ENCODE measurements at regions of chr14 and their contacts with region 1.

Region 1: GRCh38 chr14:89681086-89682018 is 264.3 kb upstream of the FOXN3 start:
- DNase-seq: peak; percentile 81
- ATAC-seq: peak; percentile 88
- H3K4me3 Mint-ChIP-seq: peak overlapping the region; percentile 58
- H3K27ac Mint-ChIP-seq: peak overlapping the region; percentile 83
- H3K4me1 Mint-ChIP-seq: peaks cover 41% of the 10 kb centered on the region
- H3K27me3 Mint-ChIP-seq: no peaks in the 10 kb centered on the region

Region 2: GRCh38 chr14:89701211-89702043 is 20.1 kb after region 1 on chr14:
- CTCF ChIA-PET with region 1: interaction called, 4 read pairs
- POLR2A ChIA-PET with region 1: no interaction called
- intact Hi-C with region 1: loop called in 1 of 2 experiments (anchors 1 kb)
- DNase-seq: peak; percentile 92
- ATAC-seq: peak; percentile 81
- H3K4me3 Mint-ChIP-seq: peak overlapping the region; percentile 65
- H3K27ac Mint-ChIP-seq: peak overlapping the region; percentile 83
- H3K4me1 Mint-ChIP-seq: peaks cover 49% of the 10 kb centered on the region
- H3K27me3 Mint-ChIP-seq: no peaks in the 10 kb centered on the region

Region 3: DNA sequence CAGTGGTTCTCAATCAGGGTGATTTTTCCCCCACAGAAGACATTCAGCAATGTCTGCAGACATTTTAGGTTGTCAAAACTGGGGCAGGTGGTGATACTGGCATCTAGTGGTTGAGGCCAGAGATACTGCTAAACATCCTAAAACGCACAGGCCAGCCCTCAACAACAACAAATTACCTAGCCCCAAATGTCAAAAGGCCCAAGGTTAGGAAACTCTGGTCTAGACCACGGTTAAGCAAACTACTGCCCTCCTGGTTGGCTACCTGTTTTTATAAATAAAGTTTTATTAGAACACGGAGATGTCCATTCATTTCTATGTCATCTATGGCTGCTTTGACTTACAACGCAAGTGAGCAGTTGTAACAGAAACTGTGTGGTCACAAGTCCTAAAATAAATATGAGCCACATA is 86.5 kb after region 1 on chr14:
- CTCF ChIA-PET with region 1: no interaction called
- POLR2A ChIA-PET with region 1: no interaction called
- intact Hi-C with region 1: loop called in 1 of 2 experiments (anchors 5 kb)
- DNase-seq: peak; percentile 78
- ATAC-seq: peak; percentile 95
- H3K4me3 Mint-ChIP-seq: peak overlapping the region; percentile 13
- H3K27ac Mint-ChIP-seq: peak overlapping the region; percentile 82
- H3K4me1 Mint-ChIP-seq: peaks cover 25% of the 10 kb centered on the region
- H3K27me3 Mint-ChIP-seq: peaks cover 2% of the 10 kb centered on the region

Region 4: GRCh38 chr14:89881839-89882238 is 200.5 kb after region 1 on chr14:
- CTCF ChIA-PET with region 1: no interaction called
- POLR2A ChIA-PET with region 1: no interaction called
- intact Hi-C with region 1: no loop called
- DNase-seq: no peak
- ATAC-seq: no peak
- H3K4me3 Mint-ChIP-seq: no peak overlapping the region
- H3K27ac Mint-ChIP-seq: no peak overlapping the region
- H3K4me1 Mint-ChIP-seq: no peaks in the 10 kb centered on the region
- H3K27me3 Mint-ChIP-seq: no peaks in the 10 kb centered on the region

Region 5: GRCh38 chr14:89973234-89973823 is 292.0 kb after region 1 on chr14:
- CTCF ChIA-PET with region 1: no interaction called
- POLR2A ChIA-PET with region 1: no interaction called
- intact Hi-C with region 1: no loop called
- DNase-seq: peak; percentile 70
- ATAC-seq: peak; percentile 63
- H3K4me3 Mint-ChIP-seq: no peak overlapping the region
- H3K27ac Mint-ChIP-seq: no peak overlapping the region
- H3K4me1 Mint-ChIP-seq: no peaks in the 10 kb centered on the region
- H3K27me3 Mint-ChIP-seq: no peaks in the 10 kb centered on the region

Measured in activated CD4-positive, alpha-beta T cell treated with anti-CD3 and anti-CD28 coated beads for 36 hours (primary cell).